Activated CD4-positive, alpha-beta T cell treated with anti-CD3 and anti-CD28 coated beads for 36 hours (primary cell): ENCODE measurements at regions of chr3 and their contacts with region 1.

Region 1: GRCh38 chr3:9168241-9168741 is 81.2 kb downstream of the SRGAP3 start:
- DNase-seq: peak; percentile 82
- ATAC-seq: peak; percentile 94
- H3K4me3 Mint-ChIP-seq: no peak overlapping the region
- H3K27ac Mint-ChIP-seq: peak overlapping the region; percentile 17
- H3K4me1 Mint-ChIP-seq: no peaks in the 10 kb centered on the region
- H3K27me3 Mint-ChIP-seq: no peaks in the 10 kb centered on the region

Region 2: DNA sequence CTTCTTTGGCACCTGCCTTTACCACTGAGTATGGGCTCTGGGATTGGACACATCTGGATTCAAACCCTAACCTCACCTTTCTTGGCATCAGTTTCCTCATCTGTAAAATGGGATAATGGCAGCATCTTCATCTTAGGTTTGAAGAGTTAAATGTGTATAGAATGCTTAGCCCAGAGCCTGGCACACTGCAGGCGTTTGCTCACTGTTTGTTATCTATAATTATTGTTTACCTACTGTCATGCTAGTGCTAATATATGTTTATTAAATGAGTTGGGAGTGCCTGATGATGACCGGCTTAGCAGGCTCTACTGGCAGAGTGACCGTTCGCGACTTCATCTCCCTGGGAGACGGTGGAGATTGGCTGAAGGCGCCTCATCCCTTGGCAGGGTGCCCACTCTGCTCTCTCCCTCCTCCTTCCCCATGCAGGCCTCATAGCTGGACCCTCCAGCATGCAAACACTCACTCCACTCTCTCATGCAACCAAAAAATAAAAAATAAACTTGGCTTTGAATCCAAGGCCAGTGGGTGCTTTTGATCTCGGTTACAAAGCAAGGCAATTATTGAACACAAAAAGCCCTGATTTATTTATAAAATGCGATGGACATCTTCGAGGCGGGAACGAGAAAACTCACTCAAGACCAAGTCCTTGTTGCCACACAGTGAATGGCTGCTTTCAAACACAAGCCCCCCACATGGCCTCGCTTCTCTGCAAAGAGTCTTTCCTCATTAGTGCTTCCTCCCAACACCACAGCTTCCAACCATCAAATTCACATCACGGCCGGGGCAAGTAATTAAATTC is 69.5 kb before region 1 on chr3:
- CTCF ChIA-PET with region 1: no interaction called
- POLR2A ChIA-PET with region 1: no interaction called
- intact Hi-C with region 1: no loop called
- DNase-seq: no peak
- ATAC-seq: no peak
- H3K4me3 Mint-ChIP-seq: no peak overlapping the region
- H3K27ac Mint-ChIP-seq: no peak overlapping the region
- H3K4me1 Mint-ChIP-seq: no peaks in the 10 kb centered on the region
- H3K27me3 Mint-ChIP-seq: no peaks in the 10 kb centered on the region

Region 3: GRCh38 chr3:9179826-9180763 is 11.8 kb after region 1 on chr3:
- CTCF ChIA-PET with region 1: no interaction called
- POLR2A ChIA-PET with region 1: no interaction called
- intact Hi-C with region 1: loop called in 1 of 2 experiments (anchors 1 kb)
- DNase-seq: peak; percentile 23
- ATAC-seq: peak; percentile 67
- H3K4me3 Mint-ChIP-seq: peak overlapping the region; percentile 58
- H3K27ac Mint-ChIP-seq: peak overlapping the region; percentile 76
- H3K4me1 Mint-ChIP-seq: peaks cover 21% of the 10 kb centered on the region
- H3K27me3 Mint-ChIP-seq: no peaks in the 10 kb centered on the region

Region 4: GRCh38 chr3:9224490-9224889 is 56.2 kb after region 1 on chr3:
- CTCF ChIA-PET with region 1: no interaction called
- POLR2A ChIA-PET with region 1: no interaction called
- intact Hi-C with region 1: loop called in 1 of 2 experiments (anchors 1 kb)
- DNase-seq: peak; percentile 67
- ATAC-seq: peak; percentile 96
- H3K4me3 Mint-ChIP-seq: no peak overlapping the region
- H3K27ac Mint-ChIP-seq: peak overlapping the region; percentile 52
- H3K4me1 Mint-ChIP-seq: peaks cover 11% of the 10 kb centered on the region
- H3K27me3 Mint-ChIP-seq: no peaks in the 10 kb centered on the region